ENCODE measurements at regions of chr19 and their contacts with region 1.

Region 1: DNA sequence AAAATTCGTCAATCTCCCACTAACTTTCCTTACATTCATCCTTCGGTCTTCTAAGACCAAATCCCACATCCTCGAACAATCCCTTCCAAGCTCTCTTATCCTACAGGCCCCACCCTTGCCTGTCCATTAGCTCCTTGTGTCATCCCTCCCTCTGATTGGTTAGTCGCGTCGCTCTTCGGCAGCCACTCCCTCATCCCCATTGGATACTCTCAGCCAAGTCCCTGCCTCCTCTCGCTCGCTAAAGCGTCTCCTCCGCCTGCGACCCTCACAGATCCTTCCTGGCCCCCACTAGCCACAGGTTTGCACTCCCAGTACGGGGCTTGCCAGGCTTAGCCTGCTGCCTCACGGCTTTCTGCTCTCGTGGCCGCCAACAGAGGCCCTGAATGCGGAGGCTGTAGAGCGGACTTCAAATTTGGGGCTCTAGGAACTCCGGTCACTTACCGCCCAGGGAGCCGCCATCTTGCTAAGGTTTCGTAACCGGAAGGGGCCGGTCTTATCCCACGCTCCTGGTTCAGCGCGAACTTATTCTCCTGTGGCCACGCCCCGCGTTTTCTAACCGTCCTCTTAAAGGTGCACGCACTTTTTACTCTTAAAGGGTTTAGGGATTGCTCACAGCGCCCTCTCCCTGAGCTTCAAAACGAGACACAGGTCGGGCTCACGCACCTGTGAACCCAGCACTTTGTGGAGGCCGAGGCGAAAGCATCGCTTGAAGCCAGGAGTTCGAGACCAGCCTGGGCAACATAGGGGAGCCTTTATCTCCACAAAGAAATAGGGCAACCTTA is at the start of gene DMAC2:
- DNase-seq: peak; percentile 98
- H3K4me3 Mint-ChIP-seq: no peak within 1 kb of the TSS
- H3K27ac Mint-ChIP-seq: no peak within 1 kb of the TSS
- H3K4me1 Mint-ChIP-seq: peaks cover 16% of the 10 kb centered on the region
- H3K27me3 Mint-ChIP-seq: no peaks in the 10 kb centered on the region
- total RNA-seq, gene DMAC2: 52.6 and 58.7 TPM in 2 replicates

Region 2: GRCh38 chr19:41353466-41354342 is 85.9 kb before region 1 on chr19 and contains the start of gene TGFB1:
- intact Hi-C with region 1: no loop called
- DNase-seq: peak; percentile 98
- H3K4me3 Mint-ChIP-seq: peak within 1 kb of the TSS; percentile 92
- H3K27ac Mint-ChIP-seq: peak within 1 kb of the TSS; percentile 96
- H3K4me1 Mint-ChIP-seq: peaks cover 56% of the 10 kb centered on the region
- H3K27me3 Mint-ChIP-seq: no peaks in the 10 kb centered on the region
- total RNA-seq, gene TGFB1: 125 and 127 TPM in 2 replicates

Region 3: DNA sequence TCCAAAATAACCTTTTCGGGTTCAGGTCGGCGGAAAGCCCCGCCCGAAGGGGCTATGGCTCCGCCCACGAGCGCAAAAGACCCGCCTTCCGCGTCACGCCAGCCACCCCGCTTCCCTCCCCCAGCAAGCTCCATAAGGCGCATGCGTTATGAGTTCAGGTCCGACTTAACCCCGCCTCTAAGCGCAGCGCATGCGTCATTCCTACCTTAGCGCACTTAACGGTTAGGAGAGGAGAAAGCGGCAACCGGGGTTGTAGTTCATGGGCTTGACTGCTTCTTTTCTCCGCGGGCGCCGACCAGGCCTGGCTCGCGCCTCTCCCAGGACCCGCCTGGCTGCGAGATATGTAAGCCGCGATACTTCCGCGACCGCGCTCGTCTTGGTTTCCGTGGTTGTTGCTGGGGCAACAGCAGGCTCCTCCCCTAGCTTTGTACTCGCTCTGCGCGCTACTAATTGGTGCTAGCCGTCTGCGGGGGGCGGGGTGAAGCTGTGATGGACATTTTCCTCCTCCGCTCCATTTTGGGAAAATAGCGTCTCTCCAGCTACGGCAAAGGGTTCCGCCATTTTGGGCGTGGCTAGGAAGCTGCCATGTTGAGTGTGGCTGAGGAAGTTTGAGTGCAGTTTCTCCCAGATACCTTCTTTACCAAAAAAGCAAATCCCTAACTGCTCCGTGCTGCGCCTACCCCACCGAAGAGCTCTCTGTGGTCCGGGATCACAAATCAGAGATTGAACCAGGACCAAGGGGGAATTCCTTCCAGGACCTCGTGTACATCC is 75.7 kb before region 1 on chr19 and contains the start of gene B9D2:
- intact Hi-C with region 1: loop called (anchors 1 kb)
- DNase-seq: peak; percentile 99
- H3K4me3 Mint-ChIP-seq: peak within 1 kb of the TSS; percentile 93
- H3K27ac Mint-ChIP-seq: peak within 1 kb of the TSS; percentile 99
- H3K4me1 Mint-ChIP-seq: peaks cover 28% of the 10 kb centered on the region
- H3K27me3 Mint-ChIP-seq: no peaks in the 10 kb centered on the region
- total RNA-seq, gene B9D2: 6.3 and 8.6 TPM in 2 replicates

Region 4: DNA sequence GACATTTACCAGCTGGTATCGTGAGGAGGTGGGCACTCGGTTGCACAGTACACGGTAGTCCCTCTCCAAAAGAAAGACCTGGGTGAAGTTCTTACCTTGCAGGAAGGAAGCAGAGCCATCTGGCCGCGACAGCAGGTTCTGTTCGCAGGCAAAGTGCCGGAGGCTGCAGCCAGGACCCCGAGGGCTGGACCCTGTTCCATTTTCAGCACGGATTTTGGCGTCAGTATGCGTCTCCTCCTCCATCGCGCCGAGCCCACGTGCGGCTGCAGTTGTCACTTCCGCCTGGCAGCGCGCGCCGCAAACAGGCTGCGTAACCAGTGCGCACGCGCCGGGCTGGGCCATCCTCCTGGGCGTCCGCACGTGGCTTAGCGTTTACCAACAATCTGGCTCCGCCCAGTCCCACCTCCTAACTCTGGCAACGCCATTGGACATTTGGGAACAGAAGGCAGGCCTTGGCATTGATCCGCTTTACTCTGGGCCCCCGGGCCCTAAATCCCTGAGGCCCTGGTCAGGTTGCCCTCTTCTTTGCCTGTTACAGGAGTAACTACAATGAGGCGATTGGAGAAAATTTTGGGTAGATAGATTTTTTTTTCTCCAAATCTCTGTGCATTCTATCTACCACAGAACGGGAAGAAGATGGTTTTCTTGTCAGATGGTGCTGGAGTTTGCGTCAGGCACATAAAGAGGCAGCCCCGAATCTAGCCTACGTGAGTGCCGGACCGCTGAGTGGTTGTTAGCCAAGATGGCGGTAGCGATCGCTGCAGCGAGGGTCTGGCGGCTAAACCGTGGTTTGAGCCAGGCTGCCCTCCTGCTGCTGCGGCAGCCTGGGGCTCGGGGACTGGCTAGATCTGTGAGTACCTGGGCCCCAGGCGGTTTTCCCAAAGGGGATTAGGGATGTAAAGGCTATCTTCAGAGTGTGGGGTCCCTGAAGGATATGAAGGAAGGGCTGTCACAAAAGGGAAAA is 42.3 kb before region 1 on chr19 and contains the starts of genes BCKDHA and EXOSC5:
- intact Hi-C with region 1: loop called (anchors 1 kb)
- DNase-seq: peak; percentile 100
- H3K4me3 Mint-ChIP-seq: peak within 1 kb of the TSS; percentile 99
- H3K27ac Mint-ChIP-seq: peak within 1 kb of the TSS; percentile 100
- H3K4me1 Mint-ChIP-seq: peaks cover 39% of the 10 kb centered on the region
- H3K27me3 Mint-ChIP-seq: no peaks in the 10 kb centered on the region
- total RNA-seq, gene BCKDHA: 11.4 and 20.1 TPM in 2 replicates
- total RNA-seq, gene EXOSC5: 65.8 and 69.2 TPM in 2 replicates

Region 5: DNA sequence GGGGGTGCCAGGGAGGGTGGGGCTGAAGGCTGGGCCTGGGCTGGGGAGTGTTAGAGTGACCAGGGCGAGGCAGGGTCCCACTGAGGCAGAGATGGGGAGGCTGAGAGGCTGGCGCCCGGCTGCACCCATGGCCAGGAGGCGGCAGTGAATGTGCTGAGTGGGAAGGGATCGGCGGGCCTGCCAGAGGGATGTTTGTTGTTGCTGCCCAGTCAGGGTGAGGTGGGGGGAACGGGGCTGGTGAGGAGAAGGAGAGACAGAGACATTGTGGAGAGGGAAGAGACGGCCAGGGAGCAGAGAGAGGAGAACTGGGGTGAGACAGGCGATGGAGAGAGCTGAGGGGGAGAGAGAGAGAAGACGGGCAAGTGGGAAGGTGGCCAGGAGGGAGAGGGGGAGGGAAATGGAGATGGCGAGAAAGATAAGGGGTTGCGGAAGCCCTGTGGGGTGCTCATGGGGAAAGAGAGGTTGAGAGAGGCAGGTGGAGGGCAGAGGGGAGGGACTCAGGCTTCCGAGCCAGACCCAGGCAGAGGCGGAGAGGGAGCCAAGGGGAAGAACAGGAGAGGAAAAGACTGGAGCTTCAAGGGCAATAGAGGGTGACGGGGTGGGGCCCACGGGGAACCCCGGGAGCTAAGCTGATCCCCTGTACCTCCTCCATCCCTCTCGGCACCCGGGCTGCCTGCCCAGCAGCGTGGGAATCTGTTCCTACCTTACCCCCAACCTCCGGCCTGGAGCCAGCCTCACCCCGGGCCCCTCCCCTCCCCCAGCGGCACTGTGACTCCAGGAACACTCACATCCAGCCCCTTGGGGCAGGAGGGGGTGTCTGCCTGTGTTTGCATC is 11.8 kb before region 1 on chr19:
- intact Hi-C with region 1: loop called (anchors 1 kb)
- DNase-seq: peak; percentile 74
- H3K4me3 Mint-ChIP-seq: peak overlapping the region; percentile 91
- H3K27ac Mint-ChIP-seq: peak overlapping the region; percentile 95
- H3K4me1 Mint-ChIP-seq: peaks cover 12% of the 10 kb centered on the region
- H3K27me3 Mint-ChIP-seq: no peaks in the 10 kb centered on the region

Region 6: GRCh38 chr19:41495589-41495988 is 56.0 kb after region 1 on chr19:
- intact Hi-C with region 1: no loop called
- DNase-seq: no peak
- H3K4me3 Mint-ChIP-seq: no peak overlapping the region
- H3K27ac Mint-ChIP-seq: no peak overlapping the region
- H3K4me1 Mint-ChIP-seq: no peaks in the 10 kb centered on the region
- H3K27me3 Mint-ChIP-seq: peaks cover 25% of the 10 kb centered on the region

Region 7: GRCh38 chr19:42140125-42140754 is 700.6 kb after region 1 on chr19:
- intact Hi-C with region 1: no loop called
- DNase-seq: peak; percentile 82
- H3K4me3 Mint-ChIP-seq: no peak overlapping the region
- H3K27ac Mint-ChIP-seq: no peak overlapping the region
- H3K4me1 Mint-ChIP-seq: peaks cover 17% of the 10 kb centered on the region
- H3K27me3 Mint-ChIP-seq: peaks cover 10% of the 10 kb centered on the region